Activated B cell treated with CpG ODN at 0.5 μM for 24 hours (primary cell): ENCODE measurements at regions of chr6 and their contacts with region 1.

Region 1: DNA sequence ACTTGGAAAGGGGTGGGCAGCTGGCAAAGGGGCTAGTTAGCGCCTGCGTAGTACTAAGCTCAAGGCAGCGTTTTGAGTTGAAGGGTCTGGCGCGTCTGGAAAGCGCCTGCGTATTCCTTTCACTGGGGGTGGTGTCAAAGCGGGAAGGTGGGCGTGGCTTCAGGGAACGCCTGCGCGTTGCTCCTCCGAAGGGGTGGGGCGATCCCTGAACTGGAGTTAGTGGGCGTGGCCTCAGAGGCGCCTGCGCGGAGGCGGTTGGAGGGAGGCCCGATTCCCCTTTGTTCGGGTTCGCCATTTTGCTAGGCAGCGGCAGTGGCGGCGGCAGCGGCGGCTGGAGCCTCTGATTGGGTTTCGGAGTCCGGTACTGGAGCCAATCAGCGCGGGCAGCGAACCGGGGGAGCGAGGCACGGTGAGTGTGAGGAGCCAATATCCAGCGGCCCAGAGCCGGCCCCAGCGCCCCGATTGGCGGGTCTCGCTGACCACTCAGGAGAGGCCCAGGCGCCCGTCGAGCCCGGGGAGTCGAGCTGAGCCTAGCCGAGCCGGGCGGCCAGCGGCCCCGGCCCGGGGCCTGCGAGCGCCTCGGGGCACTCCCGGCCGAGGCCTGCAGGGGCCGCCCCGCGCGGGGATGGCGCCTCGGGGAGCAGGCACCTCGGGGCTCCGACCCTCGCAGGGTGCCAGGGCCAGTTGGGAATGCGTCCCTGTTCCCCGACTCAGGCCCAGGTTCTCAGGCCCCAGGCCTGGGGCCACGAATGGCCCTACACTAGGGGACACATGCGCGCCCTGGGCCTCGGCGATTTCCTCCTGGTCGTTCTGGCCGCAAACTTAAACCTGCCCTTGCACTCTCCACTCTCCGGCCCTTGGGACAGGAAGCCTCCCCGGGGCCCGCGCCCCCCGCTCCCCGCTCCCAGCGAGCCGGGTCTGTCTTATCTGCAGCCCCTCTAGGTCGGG is at the start of gene NFYA:
- DNase-seq: peak; percentile 100
- ATAC-seq: peak; percentile 63
- H3K4me3 Mint-ChIP-seq: peak within 1 kb of the TSS; percentile 96
- H3K27ac Mint-ChIP-seq: peak within 1 kb of the TSS; percentile 98
- H3K4me1 Mint-ChIP-seq: peaks cover 47% of the 10 kb centered on the region
- H3K27me3 Mint-ChIP-seq: no peaks in the 10 kb centered on the region
- CTCF ChIP-seq: no peak
- total RNA-seq, gene NFYA: 33.7 and 35.1 TPM in 2 replicates

Region 2: DNA sequence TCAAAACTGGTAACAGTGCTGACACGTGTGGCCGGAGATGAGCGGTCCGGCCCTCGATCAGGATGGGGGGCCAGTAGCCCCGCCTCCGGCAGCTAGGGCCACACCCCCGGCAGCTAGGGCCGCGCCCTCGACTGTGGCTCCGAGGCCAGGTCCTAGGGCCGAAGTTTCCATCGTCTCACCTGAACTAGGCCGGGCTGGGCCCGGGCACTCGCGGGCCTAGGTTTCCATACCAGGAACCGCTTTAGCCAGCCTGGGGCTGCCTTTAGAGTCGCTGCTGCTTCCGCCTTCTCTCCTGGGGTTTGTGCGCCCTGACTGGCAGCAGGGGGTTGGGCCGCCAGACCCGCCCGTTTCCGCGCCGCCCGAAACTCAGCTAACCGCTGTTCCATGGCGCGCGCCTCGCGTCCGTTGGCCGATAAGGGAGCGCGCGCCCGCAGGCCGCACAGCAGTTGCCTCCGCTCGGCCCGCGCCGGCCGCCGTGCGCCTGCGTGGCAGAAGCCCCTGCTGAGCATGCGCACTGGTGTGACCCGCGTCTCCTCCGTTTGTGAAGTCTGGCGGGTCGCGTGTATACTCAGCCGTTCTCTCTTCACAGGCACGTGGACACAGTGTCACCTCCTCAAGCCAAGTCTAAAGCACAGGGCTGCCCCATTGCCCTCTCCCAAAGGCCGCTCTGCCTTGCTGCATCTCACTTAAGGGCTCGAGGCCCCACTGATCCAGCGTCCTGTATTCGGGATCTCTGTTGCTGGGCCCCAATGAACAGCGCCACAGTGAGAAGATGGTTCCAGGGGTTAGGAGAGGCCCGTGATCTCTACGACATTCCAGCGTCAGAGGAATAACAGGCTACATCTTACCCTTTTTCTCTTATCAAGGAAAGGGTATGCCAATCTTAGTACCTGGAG is 1958.0 kb before region 1 on chr6 and contains the start of gene SAYSD1:
- CTCF ChIA-PET with region 1: no interaction called
- POLR2A ChIA-PET with region 1: no interaction called
- intact Hi-C with region 1: loop called (anchors 2 kb)
- DNase-seq: peak; percentile 93
- ATAC-seq: peak; percentile 89
- H3K4me3 Mint-ChIP-seq: peak within 1 kb of the TSS; percentile 94
- H3K27ac Mint-ChIP-seq: peak within 1 kb of the TSS; percentile 94
- H3K4me1 Mint-ChIP-seq: peaks cover 35% of the 10 kb centered on the region
- H3K27me3 Mint-ChIP-seq: no peaks in the 10 kb centered on the region
- CTCF ChIP-seq: no peak
- total RNA-seq, gene SAYSD1: 9.6 and 9.7 TPM in 2 replicates

Region 3: GRCh38 chr6:40719671-40720374 is 353.1 kb before region 1 on chr6:
- CTCF ChIA-PET with region 1: no interaction called
- POLR2A ChIA-PET with region 1: no interaction called
- intact Hi-C with region 1: no loop called
- DNase-seq: no peak
- ATAC-seq: peak; percentile 74
- H3K4me3 Mint-ChIP-seq: peak overlapping the region; percentile 65
- H3K27ac Mint-ChIP-seq: no peak overlapping the region
- H3K4me1 Mint-ChIP-seq: peaks cover 24% of the 10 kb centered on the region
- H3K27me3 Mint-ChIP-seq: no peaks in the 10 kb centered on the region
- CTCF ChIP-seq: no peak

Region 4: DNA sequence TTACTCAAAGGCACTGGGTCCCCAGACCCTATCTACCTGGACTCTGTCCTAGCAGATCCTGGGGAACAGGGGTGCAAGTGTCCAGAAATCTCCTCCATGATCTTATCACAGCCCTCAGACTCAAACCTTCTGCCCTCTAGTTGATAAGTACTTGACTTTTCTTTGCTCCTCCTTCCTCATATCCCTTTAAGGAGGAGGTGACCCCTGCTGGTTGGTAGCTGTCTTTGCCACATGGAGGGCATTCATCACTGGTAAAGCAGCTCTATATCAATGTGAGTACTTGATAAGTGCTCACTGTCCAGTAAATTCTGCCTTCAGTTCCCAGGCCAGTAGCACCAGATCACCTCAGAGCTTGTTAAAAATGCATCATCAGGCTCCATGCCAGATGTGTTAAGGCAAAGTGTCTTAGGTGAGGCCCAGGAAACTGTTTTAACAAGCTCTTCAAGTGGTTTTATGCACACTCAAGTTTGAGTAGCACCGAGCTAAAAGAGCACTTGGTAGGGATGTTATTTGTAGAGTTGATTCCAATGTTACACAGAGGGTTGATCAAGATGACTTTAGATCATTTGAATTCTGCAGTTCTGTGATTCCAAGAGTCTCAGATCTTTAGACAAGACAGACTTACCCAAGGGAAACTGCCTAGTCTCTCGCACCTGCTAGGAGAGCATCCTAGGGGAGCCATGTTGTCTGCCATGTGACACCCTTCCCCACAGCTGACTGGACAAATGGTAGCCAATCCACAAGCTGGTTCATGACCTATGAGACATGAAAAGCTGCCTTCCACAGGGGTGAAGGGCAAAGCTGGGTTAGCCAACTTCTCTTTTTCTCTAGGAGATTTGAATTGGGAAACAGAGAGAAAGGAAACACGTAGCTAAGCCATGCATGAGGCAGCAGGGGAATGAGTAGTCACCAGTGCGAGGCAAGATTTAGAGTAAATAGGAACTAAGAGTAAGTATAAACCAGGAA is 109.4 kb after region 1 on chr6:
- CTCF ChIA-PET with region 1: interaction called, 3 read pairs
- POLR2A ChIA-PET with region 1: no interaction called
- intact Hi-C with region 1: loop called (anchors 2 kb)
- DNase-seq: no peak
- ATAC-seq: peak; percentile 88
- H3K4me3 Mint-ChIP-seq: no peak overlapping the region
- H3K27ac Mint-ChIP-seq: peak overlapping the region; percentile 76
- H3K4me1 Mint-ChIP-seq: peaks cover 54% of the 10 kb centered on the region
- H3K27me3 Mint-ChIP-seq: no peaks in the 10 kb centered on the region
- CTCF ChIP-seq: no peak

Region 5: DNA sequence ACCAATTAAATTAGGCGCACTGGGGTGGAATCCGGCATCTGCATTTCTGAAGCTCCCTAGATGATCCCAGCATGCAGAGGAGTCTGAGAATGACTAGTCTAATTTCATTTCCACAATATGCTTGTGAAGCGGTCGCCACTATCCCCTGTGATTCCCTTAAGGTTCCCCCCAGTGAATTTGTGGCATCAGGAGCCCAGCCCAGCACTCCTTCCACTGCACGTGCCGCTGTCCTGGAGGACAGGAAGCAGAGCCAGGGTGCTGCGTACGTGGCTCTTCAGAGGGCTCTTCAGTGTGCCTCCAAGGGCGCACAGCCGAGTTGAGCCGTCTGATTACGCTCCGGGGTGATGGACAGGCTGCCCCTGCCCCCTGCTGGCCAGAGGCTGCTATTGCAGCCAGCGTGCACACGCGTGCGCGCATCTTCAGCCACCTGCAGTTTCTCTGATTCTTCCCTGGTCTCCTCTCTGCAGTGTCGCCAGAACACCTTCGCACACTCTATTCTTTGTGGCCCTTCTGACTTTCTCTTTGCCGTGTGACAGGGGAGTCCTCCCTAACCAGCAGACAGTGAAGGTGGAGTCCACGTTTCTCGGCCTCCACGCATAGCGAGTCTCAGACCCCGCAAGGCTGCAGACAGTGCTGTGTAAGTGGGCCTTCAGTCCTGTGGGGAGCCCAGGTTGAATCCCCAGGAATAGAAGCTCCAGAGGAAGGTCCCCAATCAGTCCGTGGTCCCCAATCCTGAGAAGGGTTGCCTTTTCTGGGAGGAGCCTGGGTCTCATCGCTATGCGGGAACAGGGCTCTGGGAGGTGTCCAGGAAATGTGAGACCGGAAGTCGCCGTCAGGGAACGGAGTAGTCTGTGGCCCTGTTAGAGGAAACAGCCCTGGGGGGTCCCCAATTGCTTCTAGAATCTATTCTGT is 246.0 kb after region 1 on chr6:
- CTCF ChIA-PET with region 1: no interaction called
- POLR2A ChIA-PET with region 1: no interaction called
- intact Hi-C with region 1: loop called (anchors 1 kb)
- DNase-seq: peak; percentile 81
- ATAC-seq: peak; percentile 99
- H3K4me3 Mint-ChIP-seq: peak overlapping the region; percentile 80
- H3K27ac Mint-ChIP-seq: peak overlapping the region; percentile 76
- H3K4me1 Mint-ChIP-seq: peaks cover 47% of the 10 kb centered on the region
- H3K27me3 Mint-ChIP-seq: no peaks in the 10 kb centered on the region
- CTCF ChIP-seq: peak; percentile 90

Region 6: DNA sequence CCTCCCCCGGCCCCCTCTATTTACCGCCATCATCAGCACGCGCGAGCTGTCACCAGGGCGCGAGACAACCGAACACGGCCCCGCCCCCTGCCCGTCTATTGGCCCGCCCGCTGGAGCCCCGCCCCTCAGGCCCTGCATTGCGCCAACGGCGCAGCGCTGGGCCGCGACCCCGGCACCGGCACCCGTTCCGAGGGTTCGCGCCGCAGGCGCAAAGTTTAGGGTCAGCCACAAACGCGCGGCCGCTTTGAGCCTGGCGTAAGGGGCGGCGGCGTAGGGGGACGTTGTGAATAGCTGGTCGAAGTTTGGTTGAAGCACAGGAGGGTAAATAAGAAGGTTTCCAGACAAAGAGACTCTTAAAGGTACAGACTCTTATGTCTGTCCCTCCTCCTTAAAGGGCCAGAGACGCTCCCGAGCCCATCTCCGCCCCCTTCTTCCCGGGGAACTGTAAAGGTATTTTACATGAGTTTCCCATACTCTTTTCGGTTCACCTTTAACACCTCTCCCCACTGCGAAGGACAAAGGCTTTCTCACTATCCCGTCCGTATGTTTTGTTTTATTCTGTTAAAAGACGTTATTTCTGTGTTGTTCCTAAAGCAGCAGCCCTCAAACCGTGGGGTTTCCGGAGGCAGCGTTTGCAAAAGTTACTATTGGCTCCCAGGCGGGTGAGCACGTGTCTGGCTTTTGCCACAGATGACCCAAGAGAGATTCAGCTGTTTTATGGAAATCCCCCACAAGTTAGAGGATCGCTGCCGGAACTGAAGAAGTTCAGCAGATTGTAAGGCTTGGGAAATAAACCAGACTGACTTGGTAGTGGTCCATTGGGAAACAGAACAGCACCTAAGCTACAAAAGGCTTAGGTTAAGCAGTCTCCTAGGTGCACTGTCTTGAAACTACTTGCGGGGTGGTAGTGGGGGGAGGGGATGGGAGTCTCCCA is 822.6 kb after region 1 on chr6 and contains the start of gene USP49:
- CTCF ChIA-PET with region 1: no interaction called
- POLR2A ChIA-PET with region 1: no interaction called
- intact Hi-C with region 1: loop called (anchors 1 kb)
- DNase-seq: peak; percentile 90
- ATAC-seq: peak; percentile 92
- H3K4me3 Mint-ChIP-seq: no peak within 1 kb of the TSS
- H3K27ac Mint-ChIP-seq: peak within 1 kb of the TSS; percentile 95
- H3K4me1 Mint-ChIP-seq: peaks cover 14% of the 10 kb centered on the region
- H3K27me3 Mint-ChIP-seq: no peaks in the 10 kb centered on the region
- CTCF ChIP-seq: no peak
- total RNA-seq, gene USP49: 7.7 and 8.0 TPM in 2 replicates